Activated B cell treated with CpG ODN at 0.5 μM for 24 hours (primary cell): ENCODE measurements at regions of chr12 and their contacts with region 1.

Region 1: GRCh38 chr12:46179683-46180452 is 89.0 kb downstream of the SLC38A1 start:
- DNase-seq: no peak
- ATAC-seq: peak; percentile 60
- H3K4me3 Mint-ChIP-seq: peak overlapping the region; percentile 69
- H3K27ac Mint-ChIP-seq: peak overlapping the region; percentile 82
- H3K4me1 Mint-ChIP-seq: peaks cover 98% of the 10 kb centered on the region
- H3K27me3 Mint-ChIP-seq: no peaks in the 10 kb centered on the region
- CTCF ChIP-seq: no peak

Region 2: DNA sequence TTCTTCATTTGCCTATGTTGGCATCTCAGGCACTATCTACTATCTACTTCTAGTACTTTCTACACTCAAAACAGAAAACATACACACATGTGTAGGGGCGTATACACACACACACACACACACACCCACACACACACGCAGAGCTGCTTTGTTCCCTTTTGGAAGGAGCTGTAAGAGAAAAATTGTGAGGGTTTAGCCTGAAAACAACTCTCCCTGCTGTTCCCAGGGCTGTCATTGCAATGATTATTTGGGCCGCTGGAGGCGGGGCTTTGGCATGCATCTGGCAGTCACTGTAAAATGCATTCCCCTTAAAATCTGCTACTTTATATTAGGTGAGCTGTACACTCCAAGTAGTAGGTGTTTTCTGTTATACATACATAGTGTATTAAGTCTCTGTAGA is 221.8 kb after region 1 on chr12:
- CTCF ChIA-PET with region 1: no interaction called
- POLR2A ChIA-PET with region 1: no interaction called
- intact Hi-C with region 1: no loop called
- DNase-seq: no peak
- ATAC-seq: no peak
- H3K4me3 Mint-ChIP-seq: no peak overlapping the region
- H3K27ac Mint-ChIP-seq: no peak overlapping the region
- H3K4me1 Mint-ChIP-seq: peaks cover 57% of the 10 kb centered on the region
- H3K27me3 Mint-ChIP-seq: no peaks in the 10 kb centered on the region
- CTCF ChIP-seq: no peak

Region 3: GRCh38 chr12:46459861-46460545 is 280.1 kb after region 1 on chr12:
- CTCF ChIA-PET with region 1: no interaction called
- POLR2A ChIA-PET with region 1: interaction called, 12 read pairs
- intact Hi-C with region 1: no loop called
- DNase-seq: peak; percentile 18
- ATAC-seq: peak; percentile 64
- H3K4me3 Mint-ChIP-seq: peak overlapping the region; percentile 84
- H3K27ac Mint-ChIP-seq: peak overlapping the region; percentile 93
- H3K4me1 Mint-ChIP-seq: peaks cover 67% of the 10 kb centered on the region
- H3K27me3 Mint-ChIP-seq: no peaks in the 10 kb centered on the region
- CTCF ChIP-seq: no peak